B cell (primary cell): ENCODE measurements at regions of chr6 and their contacts with region 1.

Region 1: GRCh38 chr6:129730477-129731165 is 20.6 kb upstream of the ARHGAP18 start:
- DNase-seq: peak; percentile 65
- ATAC-seq: peak; percentile 24
- H3K4me3 ChIP-seq: no peak overlapping the region
- H3K4me3 Mint-ChIP-seq: no peak overlapping the region
- H3K27ac ChIP-seq: no peak overlapping the region
- H3K27ac Mint-ChIP-seq: no peak overlapping the region
- H3K4me1 ChIP-seq: peaks cover 0 to 4% of the 10 kb centered on the region in 2 donors
- H3K4me1 Mint-ChIP-seq: no peaks in the 10 kb centered on the region
- H3K27me3 ChIP-seq: no peaks in the 10 kb centered on the region
- H3K27me3 Mint-ChIP-seq: no peaks in the 10 kb centered on the region
- CTCF ChIP-seq: peak; percentile 78

Region 2: DNA sequence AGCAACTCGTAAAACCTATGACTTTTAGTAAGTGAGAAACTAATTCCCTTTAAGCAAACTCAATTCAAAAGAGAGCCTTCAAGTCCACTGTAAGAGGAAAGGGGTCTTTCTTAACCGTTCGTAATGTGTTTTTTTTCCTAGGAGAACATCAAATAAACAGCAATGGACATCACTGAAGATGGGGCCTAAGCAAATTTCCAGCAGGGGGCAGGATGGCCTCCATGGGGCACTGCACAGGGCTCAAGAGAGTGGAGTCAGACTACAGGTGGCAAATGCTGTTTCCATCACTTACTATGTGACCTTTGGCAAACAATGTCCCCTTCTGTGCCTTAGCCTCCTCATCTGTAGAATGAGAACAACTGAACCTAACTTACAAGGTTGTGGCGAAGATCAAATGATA is 109.4 kb before region 1 on chr6:
- CTCF ChIA-PET with region 1: interaction called, 15 read pairs
- POLR2A ChIA-PET with region 1: no interaction called
- intact Hi-C with region 1: loop called (anchors 2 kb)
- DNase-seq: peak; percentile 47
- ATAC-seq: peak; percentile 57
- H3K4me3 ChIP-seq: no peak overlapping the region
- H3K4me3 Mint-ChIP-seq: no peak overlapping the region
- H3K27ac ChIP-seq: no peak overlapping the region
- H3K27ac Mint-ChIP-seq: no peak overlapping the region
- H3K4me1 ChIP-seq: no peaks in the 10 kb centered on the region
- H3K4me1 Mint-ChIP-seq: no peaks in the 10 kb centered on the region
- H3K27me3 ChIP-seq: no peaks in the 10 kb centered on the region
- H3K27me3 Mint-ChIP-seq: no peaks in the 10 kb centered on the region
- CTCF ChIP-seq: peak; percentile 31

Region 3: GRCh38 chr6:129672881-129673643 is 57.6 kb before region 1 on chr6:
- CTCF ChIA-PET with region 1: interaction called, 46 read pairs
- POLR2A ChIA-PET with region 1: no interaction called
- intact Hi-C with region 1: loop called (anchors 1 kb)
- DNase-seq: no peak
- ATAC-seq: peak; percentile 32
- H3K4me3 ChIP-seq: no peak overlapping the region
- H3K4me3 Mint-ChIP-seq: peak overlapping the region; percentile 17
- H3K27ac ChIP-seq: peak overlapping the region in 1 of 2 donors; percentile 43
- H3K27ac Mint-ChIP-seq: peak overlapping the region; percentile 70
- H3K4me1 ChIP-seq: peaks cover 12 to 14% of the 10 kb centered on the region in 2 donors
- H3K4me1 Mint-ChIP-seq: peaks cover 21% of the 10 kb centered on the region
- H3K27me3 ChIP-seq: no peaks in the 10 kb centered on the region
- H3K27me3 Mint-ChIP-seq: no peaks in the 10 kb centered on the region
- CTCF ChIP-seq: no peak

Region 4: GRCh38 chr6:129719692-129720091 is 10.9 kb before region 1 on chr6:
- CTCF ChIA-PET with region 1: interaction called, 11 read pairs
- POLR2A ChIA-PET with region 1: no interaction called
- intact Hi-C with region 1: no loop called
- DNase-seq: no peak
- ATAC-seq: no peak
- H3K4me3 ChIP-seq: no peak overlapping the region
- H3K4me3 Mint-ChIP-seq: no peak overlapping the region
- H3K27ac ChIP-seq: no peak overlapping the region
- H3K27ac Mint-ChIP-seq: no peak overlapping the region
- H3K4me1 ChIP-seq: no peaks in the 10 kb centered on the region
- H3K4me1 Mint-ChIP-seq: no peaks in the 10 kb centered on the region
- H3K27me3 ChIP-seq: no peaks in the 10 kb centered on the region
- H3K27me3 Mint-ChIP-seq: no peaks in the 10 kb centered on the region
- CTCF ChIP-seq: no peak

Region 5: DNA sequence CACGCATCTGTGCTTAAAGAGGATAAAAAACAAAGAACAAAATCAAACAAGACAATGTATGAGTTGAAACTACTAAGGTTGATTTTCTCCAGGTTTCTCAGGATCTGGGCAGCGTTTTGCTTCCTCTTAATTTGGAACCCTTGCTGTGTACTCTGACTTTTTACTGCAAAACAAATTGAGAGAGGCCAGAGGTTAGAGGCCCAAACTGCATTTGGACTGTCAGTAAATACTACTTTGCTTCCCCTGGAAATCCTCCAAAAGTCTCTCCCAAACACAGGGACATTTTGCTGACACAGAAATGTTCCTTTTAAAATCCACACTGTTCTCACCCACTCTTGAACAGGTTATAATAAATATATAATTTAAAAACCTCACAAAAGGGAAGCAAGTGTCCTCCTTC is 1843.5 kb after region 1 on chr6:
- CTCF ChIA-PET with region 1: no interaction called
- POLR2A ChIA-PET with region 1: no interaction called
- intact Hi-C with region 1: no loop called
- DNase-seq: no peak
- ATAC-seq: no peak
- H3K4me3 ChIP-seq: peak overlapping the region in 1 of 5 experiments; percentile 48
- H3K4me3 Mint-ChIP-seq: no peak overlapping the region
- H3K27ac ChIP-seq: no peak overlapping the region
- H3K27ac Mint-ChIP-seq: no peak overlapping the region
- H3K4me1 ChIP-seq: no peaks in the 10 kb centered on the region
- H3K4me1 Mint-ChIP-seq: peaks cover 5% of the 10 kb centered on the region
- H3K27me3 ChIP-seq: no peaks in the 10 kb centered on the region
- H3K27me3 Mint-ChIP-seq: no peaks in the 10 kb centered on the region
- CTCF ChIP-seq: no peak